ENCODE measurements at regions of chr2 and their contacts with region 1.

Region 1: GRCh38 chr2:68925295-68925896 is 27.3 kb downstream of the GKN2 start:
- DNase-seq: peak; percentile 58
- H3K4me3 ChIP-seq: no peak overlapping the region
- H3K27ac ChIP-seq: no peak overlapping the region
- H3K4me1 ChIP-seq: no peaks in the 10 kb centered on the region
- H3K27me3 ChIP-seq: peaks cover 2 to 9% of the 10 kb centered on the region in 2 experiments
- CTCF ChIP-seq: peak; percentile 83 to 87
- POLR2A ChIP-seq: no peak

Region 2: DNA sequence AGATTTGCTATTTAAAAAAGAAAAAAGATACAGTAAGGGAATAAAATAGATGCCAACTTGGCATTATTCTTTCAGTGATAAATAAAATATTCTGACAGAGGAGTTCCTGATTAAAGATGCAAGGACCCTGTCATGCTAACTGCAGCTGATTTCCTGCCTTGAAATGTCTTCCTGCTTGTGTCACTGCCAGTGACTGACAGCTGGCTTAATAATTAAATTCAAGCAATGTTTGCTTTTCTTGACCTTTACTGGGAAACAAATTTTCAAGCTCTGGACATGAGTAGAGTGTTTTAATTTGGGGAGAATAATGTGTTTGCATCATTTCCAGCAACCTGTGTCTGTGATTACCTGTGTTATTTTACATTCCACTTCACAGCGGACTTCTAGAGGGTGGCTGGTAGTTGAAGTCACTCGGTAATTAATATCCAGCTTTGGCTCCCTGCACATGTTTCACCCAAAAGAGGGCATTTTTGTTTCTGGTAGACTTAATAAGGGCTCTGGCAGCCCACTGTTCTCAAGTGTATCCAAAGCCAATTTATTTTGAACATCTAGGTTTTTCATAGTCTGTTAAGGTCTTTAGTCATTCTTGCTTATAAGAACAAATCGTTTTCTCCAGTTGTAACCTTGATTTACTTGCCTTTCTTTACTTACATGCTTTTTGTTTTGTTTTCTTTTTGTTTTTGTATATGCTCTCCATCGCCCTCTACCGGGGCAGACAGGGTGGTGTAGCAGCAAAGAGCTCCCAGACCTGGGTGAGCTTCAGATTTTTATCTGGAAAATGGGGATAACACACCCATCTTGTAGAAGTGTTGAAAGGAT is 330.5 kb before region 1 on chr2:
- CTCF ChIA-PET with region 1: interaction called, 25 read pairs
- POLR2A ChIA-PET with region 1: no interaction called
- dilution Hi-C with region 1: no loop called
- intact Hi-C with region 1: no loop called
- DNase-seq: peak; percentile 63
- H3K4me3 ChIP-seq: no peak overlapping the region
- H3K27ac ChIP-seq: no peak overlapping the region
- H3K4me1 ChIP-seq: no peaks in the 10 kb centered on the region
- H3K27me3 ChIP-seq: peaks cover 0 to 4% of the 10 kb centered on the region in 2 experiments
- CTCF ChIP-seq: peak; percentile 75 to 77
- POLR2A ChIP-seq: no peak

Region 3: GRCh38 chr2:68721482-68722101 is 203.8 kb before region 1 on chr2:
- CTCF ChIA-PET with region 1: interaction called, 517 read pairs
- POLR2A ChIA-PET with region 1: no interaction called
- dilution Hi-C with region 1: loop called (anchors 25 kb)
- intact Hi-C with region 1: no loop called
- DNase-seq: no peak
- H3K4me3 ChIP-seq: no peak overlapping the region
- H3K27ac ChIP-seq: no peak overlapping the region
- H3K4me1 ChIP-seq: no peaks in the 10 kb centered on the region
- H3K27me3 ChIP-seq: peaks cover 8 to 17% of the 10 kb centered on the region in 2 experiments
- CTCF ChIP-seq: no peak
- POLR2A ChIP-seq: no peak

Region 4: DNA sequence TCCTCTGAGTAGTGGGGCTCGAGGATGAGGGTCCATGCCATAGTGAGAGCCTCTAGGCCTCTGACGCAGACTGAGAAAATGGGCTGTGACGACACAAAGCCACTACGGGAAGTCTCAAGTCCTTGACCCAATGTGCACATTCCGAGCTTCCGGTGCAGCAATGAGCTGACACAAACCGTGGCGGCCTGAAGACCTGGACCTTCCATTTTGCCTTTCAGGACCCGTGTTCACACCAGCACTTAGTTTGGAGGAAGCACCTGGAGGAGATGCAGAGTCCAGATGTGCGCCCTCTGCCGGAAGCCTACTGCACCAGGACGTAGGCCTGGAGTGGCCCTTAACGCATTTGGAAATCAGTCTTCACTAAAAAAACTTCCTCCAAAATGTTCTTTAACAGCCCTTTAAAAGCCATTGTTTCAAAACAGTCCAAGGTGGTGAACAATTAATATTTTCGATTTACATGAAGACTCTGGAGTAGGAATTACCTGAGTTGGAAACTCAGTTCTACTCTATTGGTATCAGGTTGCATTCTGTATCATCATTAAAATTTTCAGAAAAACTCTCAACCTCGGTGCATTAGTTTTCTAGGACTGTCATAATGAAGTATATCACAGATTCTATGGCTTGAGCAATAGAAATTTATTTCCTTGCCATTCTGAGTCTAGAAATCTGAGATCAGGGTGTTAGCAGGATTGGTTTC is 88.1 kb before region 1 on chr2:
- CTCF ChIA-PET with region 1: interaction called, 52 read pairs
- POLR2A ChIA-PET with region 1: no interaction called
- dilution Hi-C with region 1: no loop called
- intact Hi-C with region 1: loop called (anchors 1 kb)
- DNase-seq: peak; percentile 73
- H3K4me3 ChIP-seq: no peak overlapping the region
- H3K27ac ChIP-seq: no peak overlapping the region
- H3K4me1 ChIP-seq: peaks cover 10% of the 10 kb centered on the region
- H3K27me3 ChIP-seq: no peaks in the 10 kb centered on the region
- CTCF ChIP-seq: peak; percentile 60 to 69
- POLR2A ChIP-seq: no peak

Region 5: DNA sequence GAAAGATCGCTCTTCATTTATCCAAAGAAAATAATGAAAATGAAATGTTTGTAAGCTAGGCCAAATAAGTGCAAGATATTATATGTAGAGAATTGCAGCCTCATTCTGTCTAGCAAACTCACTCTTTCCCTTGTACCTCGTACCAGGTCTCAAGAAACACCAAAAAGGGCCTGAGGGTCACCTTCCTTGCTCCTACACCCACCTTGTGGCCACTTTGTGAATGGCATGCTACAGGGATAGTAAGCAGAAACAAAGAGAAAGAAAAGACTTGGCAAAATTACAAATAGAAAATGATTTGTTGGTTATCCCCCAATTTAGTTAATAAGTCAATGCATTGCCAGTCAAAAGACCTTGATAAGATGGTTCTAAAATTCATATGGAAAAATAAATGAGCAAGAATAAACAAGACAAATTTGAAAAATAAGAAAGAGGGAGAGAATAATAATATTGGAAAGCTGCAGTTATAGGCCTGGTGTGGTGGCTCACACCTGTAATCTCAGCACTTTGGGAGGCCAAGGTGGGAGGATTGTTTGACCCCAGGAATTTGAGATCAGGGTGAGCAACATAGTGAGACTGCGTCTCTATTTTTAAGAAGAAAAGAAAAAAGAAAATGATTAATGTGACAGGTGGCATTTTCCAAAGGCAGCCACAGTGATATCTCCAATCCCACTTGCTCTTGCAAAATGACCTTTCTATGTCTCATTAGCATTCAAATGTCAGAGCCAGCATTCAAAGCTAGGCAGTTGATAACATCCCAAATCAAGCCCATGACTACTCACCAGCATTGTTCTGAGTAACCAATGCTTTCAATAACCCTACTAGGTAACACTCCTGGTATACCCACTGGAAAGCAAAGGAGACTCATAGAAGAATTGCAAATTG is 15.4 kb before region 1 on chr2:
- CTCF ChIA-PET with region 1: interaction called, 29 read pairs
- POLR2A ChIA-PET with region 1: no interaction called
- dilution Hi-C with region 1: no loop called
- intact Hi-C with region 1: no loop called
- DNase-seq: peak; percentile 82
- H3K4me3 ChIP-seq: no peak overlapping the region
- H3K27ac ChIP-seq: no peak overlapping the region
- H3K4me1 ChIP-seq: peaks cover 32% of the 10 kb centered on the region
- H3K27me3 ChIP-seq: peaks cover 4 to 12% of the 10 kb centered on the region in 2 experiments
- CTCF ChIP-seq: peak; percentile 77 to 86
- POLR2A ChIP-seq: no peak

Region 6: GRCh38 chr2:68994864-68995263 is 69.5 kb after region 1 on chr2:
- CTCF ChIA-PET with region 1: no interaction called
- POLR2A ChIA-PET with region 1: no interaction called
- dilution Hi-C with region 1: no loop called
- intact Hi-C with region 1: no loop called
- DNase-seq: no peak
- H3K4me3 ChIP-seq: no peak overlapping the region
- H3K27ac ChIP-seq: no peak overlapping the region
- H3K4me1 ChIP-seq: no peaks in the 10 kb centered on the region
- H3K27me3 ChIP-seq: peaks cover 17 to 27% of the 10 kb centered on the region in 2 experiments
- CTCF ChIP-seq: no peak
- POLR2A ChIP-seq: no peak

Measured in endothelial cell of umbilical vein (primary cell).